Activated CD4-positive, alpha-beta T cell treated with anti-CD3 and anti-CD28 coated beads, Interleukin-2, amount 10 ng/mL, durations not matched to agents 24 days and 14 days (primary cell): ENCODE measurements at regions of chr11 and their contacts with region 1.

Region 1: DNA sequence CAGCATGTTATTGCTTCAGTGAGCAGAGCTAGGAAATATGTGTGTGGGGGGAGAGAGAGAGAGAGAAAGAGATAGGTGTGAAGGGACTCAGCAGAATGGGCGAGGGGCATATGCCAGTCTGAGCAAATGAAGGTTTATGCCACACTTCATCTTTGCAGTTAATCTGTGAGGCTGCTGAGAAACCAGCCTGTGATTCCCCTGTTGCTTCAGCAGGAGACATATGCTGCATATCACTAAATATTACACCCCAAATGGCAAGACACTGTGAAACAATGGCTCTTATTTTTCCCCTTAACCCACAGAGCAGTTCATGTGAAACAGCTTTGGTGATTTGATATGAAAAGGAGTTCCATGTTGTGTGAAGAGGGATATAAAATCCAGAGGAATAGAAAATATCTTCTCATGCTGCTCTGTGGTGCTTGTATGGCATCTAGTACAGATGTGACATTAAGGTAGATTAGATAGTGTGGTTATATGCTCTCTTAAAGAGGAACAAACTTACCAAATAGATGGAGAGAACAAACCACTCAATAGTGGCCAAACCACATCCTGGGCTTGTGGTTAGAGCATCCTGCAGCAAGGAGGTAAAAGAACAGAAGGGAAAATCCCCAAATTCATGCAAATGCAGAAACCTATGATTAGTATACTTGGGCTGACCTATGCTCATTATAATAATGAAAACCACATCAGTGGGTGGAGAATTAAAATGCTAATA is 864.2 kb downstream of the FAM181B start:
- DNase-seq: peak; percentile 96
- H3K4me3 Mint-ChIP-seq: peak overlapping the region; percentile 77
- H3K27ac Mint-ChIP-seq: peak overlapping the region; percentile 82
- H3K4me1 Mint-ChIP-seq: peaks cover 38% of the 10 kb centered on the region
- H3K27me3 Mint-ChIP-seq: peaks cover 15% of the 10 kb centered on the region

Region 2: DNA sequence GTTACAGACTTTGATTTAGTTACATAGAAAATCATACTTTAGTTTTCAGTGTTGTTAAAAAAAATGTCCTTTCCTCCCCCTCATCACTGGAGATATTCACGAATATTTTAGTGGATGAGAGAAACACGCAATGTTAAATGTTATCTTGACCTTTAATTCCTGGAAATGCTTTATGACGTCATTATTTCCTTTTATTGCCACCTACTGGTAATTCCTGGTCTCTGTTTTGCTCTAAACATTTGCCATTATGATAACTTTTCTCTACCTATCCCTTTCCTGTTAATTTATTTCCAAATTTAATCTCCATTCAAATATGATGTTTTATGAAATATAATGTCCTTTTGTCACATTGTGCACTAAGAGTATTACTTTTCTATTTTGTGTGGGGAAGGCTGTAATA is 93.5 kb after region 1 on chr11:
- intact Hi-C with region 1: loop called (anchors 1 kb)
- DNase-seq: no peak
- H3K4me3 Mint-ChIP-seq: peak overlapping the region; percentile 13
- H3K27ac Mint-ChIP-seq: no peak overlapping the region
- H3K4me1 Mint-ChIP-seq: peaks cover 15% of the 10 kb centered on the region
- H3K27me3 Mint-ChIP-seq: no peaks in the 10 kb centered on the region

Region 3: GRCh38 chr11:82003671-82004515 is 134.4 kb after region 1 on chr11:
- intact Hi-C with region 1: loop called (anchors 1 kb)
- DNase-seq: peak; percentile 49
- H3K4me3 Mint-ChIP-seq: no peak overlapping the region
- H3K27ac Mint-ChIP-seq: peak overlapping the region; percentile 41
- H3K4me1 Mint-ChIP-seq: peaks cover 20% of the 10 kb centered on the region
- H3K27me3 Mint-ChIP-seq: no peaks in the 10 kb centered on the region